Activated T-helper 1 cell treated with anti-CD3 and anti-CD28 coated beads, Interleukin-12 subunit alpha, Interleukin-12 subunit beta, Interleukin-2, Interleukin-4 antibody, amounts not matched to agents 30 ng/mL and 10 ng/mL and 1 ng/mL, durations not matched to agents 14 hours and 24 hours and 36 hours (primary cell): ENCODE measurements at regions of chr17 and their contacts with region 1.

Region 1: GRCh38 chr17:30116661-30117551 is at the start of gene NSRP1:
- DNase-seq: peak; percentile 92
- H3K4me3 Mint-ChIP-seq: peak within 1 kb of the TSS; percentile 100
- H3K27ac Mint-ChIP-seq: peak within 1 kb of the TSS; percentile 99
- H3K4me1 Mint-ChIP-seq: peaks cover 69% of the 10 kb centered on the region
- H3K27me3 Mint-ChIP-seq: no peaks in the 10 kb centered on the region
- total RNA-seq, gene NSRP1: 32.4 and 35.3 TPM in 2 replicates

Region 2: GRCh38 chr17:29760761-29761696 is 355.9 kb before region 1 on chr17:
- intact Hi-C with region 1: loop called (anchors 2 kb)
- DNase-seq: peak; percentile 91
- H3K4me3 Mint-ChIP-seq: peak overlapping the region; percentile 97
- H3K27ac Mint-ChIP-seq: peak overlapping the region; percentile 92
- H3K4me1 Mint-ChIP-seq: peaks cover 36% of the 10 kb centered on the region
- H3K27me3 Mint-ChIP-seq: no peaks in the 10 kb centered on the region

Region 3: GRCh38 chr17:30062372-30062771 is 54.5 kb before region 1 on chr17:
- intact Hi-C with region 1: no loop called
- DNase-seq: no peak
- H3K4me3 Mint-ChIP-seq: no peak overlapping the region
- H3K27ac Mint-ChIP-seq: no peak overlapping the region
- H3K4me1 Mint-ChIP-seq: no peaks in the 10 kb centered on the region
- H3K27me3 Mint-ChIP-seq: peaks cover 10% of the 10 kb centered on the region

Region 4: DNA sequence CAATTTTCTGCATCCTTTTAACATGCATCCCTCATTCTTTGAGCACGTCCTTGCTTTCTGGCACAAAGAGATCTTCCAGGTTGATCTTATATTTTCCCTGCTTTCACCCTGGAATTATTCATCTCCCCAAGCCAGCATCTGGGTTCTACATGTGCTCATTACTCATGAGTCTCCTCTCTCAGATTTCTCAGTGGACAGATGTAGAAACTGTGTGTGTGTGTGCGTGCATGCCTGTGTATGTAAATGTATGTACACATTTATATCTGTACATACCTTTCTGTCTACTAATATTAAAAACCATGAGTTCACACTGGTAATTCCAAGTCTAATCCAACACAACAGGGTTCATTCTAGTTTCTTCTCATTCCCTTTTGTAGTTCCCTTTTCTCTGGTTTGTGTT is 42.2 kb before region 1 on chr17:
- intact Hi-C with region 1: no loop called
- DNase-seq: no peak
- H3K4me3 Mint-ChIP-seq: no peak overlapping the region
- H3K27ac Mint-ChIP-seq: no peak overlapping the region
- H3K4me1 Mint-ChIP-seq: no peaks in the 10 kb centered on the region
- H3K27me3 Mint-ChIP-seq: peaks cover 26% of the 10 kb centered on the region

Region 5: DNA sequence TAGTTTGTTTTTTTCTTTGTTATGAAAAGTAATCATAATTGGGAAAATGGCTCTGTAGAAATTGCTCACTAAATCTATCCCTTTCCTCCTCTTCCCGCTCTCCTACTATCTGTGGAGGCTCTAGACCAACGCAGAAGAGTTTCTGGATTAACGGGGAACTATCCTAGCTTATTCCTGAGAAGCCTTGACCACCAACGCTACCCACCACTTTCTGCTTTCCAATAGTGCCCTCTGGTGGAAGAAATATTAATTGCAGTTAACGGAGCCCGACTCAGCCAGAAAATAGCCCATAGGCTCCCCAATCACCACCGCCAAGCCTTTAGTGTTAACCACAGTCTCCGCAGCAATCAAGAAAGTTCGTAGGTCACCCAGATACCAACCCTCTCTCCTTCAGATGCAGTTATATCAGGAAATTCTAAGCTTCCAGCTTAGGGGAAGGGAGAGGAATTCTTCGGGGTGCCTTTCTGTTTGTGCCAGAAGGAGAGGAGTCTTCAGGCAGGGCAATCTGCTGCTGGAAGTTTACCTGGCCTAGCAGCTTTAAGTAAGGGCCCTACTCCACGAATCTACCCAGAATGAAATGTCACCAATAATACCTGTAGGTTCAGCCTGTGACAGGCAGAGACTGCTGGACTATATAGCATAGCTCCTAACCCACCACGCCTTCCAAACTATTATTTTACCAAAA is 23.3 kb before region 1 on chr17:
- intact Hi-C with region 1: no loop called
- DNase-seq: peak; percentile 25
- H3K4me3 Mint-ChIP-seq: no peak overlapping the region
- H3K27ac Mint-ChIP-seq: no peak overlapping the region
- H3K4me1 Mint-ChIP-seq: peaks cover 9% of the 10 kb centered on the region
- H3K27me3 Mint-ChIP-seq: peaks cover 39% of the 10 kb centered on the region

Region 6: DNA sequence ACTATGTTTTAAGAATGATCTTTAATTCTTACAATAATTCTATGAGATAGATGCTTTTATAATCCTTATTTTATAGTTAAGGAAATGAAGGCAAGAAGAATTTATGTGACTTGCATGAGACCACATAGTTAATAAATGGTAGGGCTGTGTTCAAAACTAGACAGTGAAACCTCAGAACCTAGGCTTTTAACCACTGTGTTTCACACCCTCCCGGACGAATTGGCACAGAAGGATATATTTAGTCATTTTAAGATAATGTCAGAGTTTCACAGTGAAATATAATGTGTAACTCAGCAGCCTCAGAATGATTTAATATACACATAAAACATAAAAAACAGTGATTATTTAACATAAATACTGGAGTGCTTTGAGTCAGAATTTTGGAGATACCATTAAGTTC is 56.7 kb after region 1 on chr17:
- intact Hi-C with region 1: loop called (anchors 1 kb)
- DNase-seq: no peak
- H3K4me3 Mint-ChIP-seq: no peak overlapping the region
- H3K27ac Mint-ChIP-seq: no peak overlapping the region
- H3K4me1 Mint-ChIP-seq: peaks cover 23% of the 10 kb centered on the region
- H3K27me3 Mint-ChIP-seq: no peaks in the 10 kb centered on the region

Region 7: DNA sequence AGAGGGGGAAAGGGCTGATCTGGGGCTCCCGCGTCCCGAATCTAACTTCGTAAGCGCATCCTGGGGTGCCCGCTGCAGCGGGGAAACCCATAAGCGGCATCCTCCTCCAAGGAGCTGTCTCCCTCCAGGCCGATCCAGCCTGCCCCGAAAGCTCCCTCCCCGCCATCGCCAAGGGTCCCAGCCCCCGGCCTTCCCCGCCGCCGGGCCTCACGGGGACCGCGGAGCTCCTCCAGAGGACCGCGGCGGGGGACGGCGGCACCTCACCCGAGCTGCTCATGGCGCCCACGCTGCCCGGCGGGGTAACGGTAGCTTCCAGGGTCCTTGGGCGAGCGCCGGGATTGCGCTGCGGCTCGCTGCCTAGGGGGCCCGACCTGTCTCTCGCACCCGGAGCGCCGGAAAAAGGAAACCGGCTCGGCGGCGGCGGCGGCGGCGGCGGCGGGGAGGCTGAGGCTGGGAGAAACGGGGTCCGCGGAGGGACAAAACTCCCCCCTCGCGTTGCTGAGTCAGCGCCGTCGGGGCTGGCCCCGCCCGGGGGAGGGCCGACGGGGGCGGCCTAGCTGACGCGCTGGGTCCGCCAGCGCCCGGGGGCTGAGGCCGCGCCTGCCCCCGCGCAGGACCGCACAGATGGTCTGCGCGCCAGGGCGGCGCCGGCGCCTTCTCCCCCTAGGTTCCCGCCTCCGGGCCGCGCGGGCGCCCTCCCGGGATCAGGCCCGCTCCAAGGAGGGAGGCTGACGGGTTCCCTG is 174.8 kb after region 1 on chr17 and contains the start of gene BLMH:
- intact Hi-C with region 1: loop called (anchors 2 kb)
- DNase-seq: peak; percentile 80
- H3K4me3 Mint-ChIP-seq: peak within 1 kb of the TSS; percentile 97
- H3K27ac Mint-ChIP-seq: peak within 1 kb of the TSS; percentile 90
- H3K4me1 Mint-ChIP-seq: peaks cover 13% of the 10 kb centered on the region
- H3K27me3 Mint-ChIP-seq: no peaks in the 10 kb centered on the region
- total RNA-seq, gene BLMH: 64.8 and 64.9 TPM in 2 replicates

Region 8: DNA sequence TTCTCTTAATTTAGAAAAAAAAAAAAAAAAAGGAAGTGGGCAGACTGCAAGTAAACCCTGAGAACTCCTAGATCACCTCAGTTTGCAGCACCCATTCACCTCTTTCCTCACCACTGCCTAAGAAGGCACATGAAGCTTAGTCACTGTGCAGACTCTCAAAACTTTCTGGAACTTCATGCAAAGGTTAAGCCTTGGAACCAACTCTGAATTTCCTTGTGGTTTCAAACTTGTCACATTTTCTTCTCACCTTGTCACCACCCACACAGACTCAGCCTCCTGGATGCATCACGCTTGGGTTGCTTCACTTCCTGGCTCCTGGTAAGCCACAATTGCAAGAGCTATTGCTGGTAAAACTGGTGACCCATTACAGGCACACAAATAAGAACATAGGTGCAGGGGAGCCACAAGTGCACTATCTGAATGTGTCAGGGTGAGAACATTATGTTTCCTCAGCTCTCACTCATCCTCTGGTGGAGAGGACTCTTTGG is 246.9 kb after region 1 on chr17:
- intact Hi-C with region 1: loop called (anchors 1 kb)
- DNase-seq: peak; percentile 84
- H3K4me3 Mint-ChIP-seq: peak overlapping the region; percentile 44
- H3K27ac Mint-ChIP-seq: peak overlapping the region; percentile 90
- H3K4me1 Mint-ChIP-seq: peaks cover 36% of the 10 kb centered on the region
- H3K27me3 Mint-ChIP-seq: no peaks in the 10 kb centered on the region

Region 9: GRCh38 chr17:30477083-30477773 is 360.3 kb after region 1 on chr17 and contains the start of gene GOSR1:
- intact Hi-C with region 1: loop called (anchors 2 kb)
- DNase-seq: peak; percentile 87
- H3K4me3 Mint-ChIP-seq: peak within 1 kb of the TSS; percentile 98
- H3K27ac Mint-ChIP-seq: peak within 1 kb of the TSS; percentile 98
- H3K4me1 Mint-ChIP-seq: peaks cover 34% of the 10 kb centered on the region
- H3K27me3 Mint-ChIP-seq: no peaks in the 10 kb centered on the region
- total RNA-seq, gene GOSR1: 61.5 and 66.6 TPM in 2 replicates